Activated T-helper 1 cell treated with anti-CD3 and anti-CD28 coated beads, Interleukin-12 subunit alpha, Interleukin-12 subunit beta, Interleukin-2, Interleukin-4 antibody, amounts not matched to agents 30 ng/mL and 10 ng/mL and 1 ng/mL, durations not matched to agents 14 hours and 24 hours and 36 hours (primary cell): ENCODE measurements at regions of chrX and their contacts with region 1.

Region 1: GRCh38 chrX:41333744-41334259 is at the start of gene DDX3X:
- DNase-seq: peak; percentile 81
- H3K4me3 Mint-ChIP-seq: peak within 1 kb of the TSS; percentile 91
- H3K27ac Mint-ChIP-seq: peak within 1 kb of the TSS; percentile 99
- H3K4me1 Mint-ChIP-seq: peaks cover 41% of the 10 kb centered on the region
- H3K27me3 Mint-ChIP-seq: peaks cover 5% of the 10 kb centered on the region
- total RNA-seq, gene DDX3X: 312 and 337 TPM in 2 replicates

Region 2: GRCh38 chrX:40735325-40736169 is 598.3 kb before region 1 on chrX and contains the start of gene MED14:
- intact Hi-C with region 1: loop called (anchors 5 kb)
- DNase-seq: peak; percentile 82
- H3K4me3 Mint-ChIP-seq: peak within 1 kb of the TSS; percentile 87
- H3K27ac Mint-ChIP-seq: peak within 1 kb of the TSS; percentile 90
- H3K4me1 Mint-ChIP-seq: peaks cover 30% of the 10 kb centered on the region
- H3K27me3 Mint-ChIP-seq: no peaks in the 10 kb centered on the region
- total RNA-seq, gene MED14: 36.4 and 40.9 TPM in 2 replicates

Region 3: GRCh38 chrX:41275661-41276609 is 57.9 kb before region 1 on chrX:
- intact Hi-C with region 1: loop called (anchors 2 kb)
- DNase-seq: peak; percentile 16
- H3K4me3 Mint-ChIP-seq: peak overlapping the region; percentile 77
- H3K27ac Mint-ChIP-seq: peak overlapping the region; percentile 90
- H3K4me1 Mint-ChIP-seq: peaks cover 8% of the 10 kb centered on the region
- H3K27me3 Mint-ChIP-seq: no peaks in the 10 kb centered on the region

Region 4: DNA sequence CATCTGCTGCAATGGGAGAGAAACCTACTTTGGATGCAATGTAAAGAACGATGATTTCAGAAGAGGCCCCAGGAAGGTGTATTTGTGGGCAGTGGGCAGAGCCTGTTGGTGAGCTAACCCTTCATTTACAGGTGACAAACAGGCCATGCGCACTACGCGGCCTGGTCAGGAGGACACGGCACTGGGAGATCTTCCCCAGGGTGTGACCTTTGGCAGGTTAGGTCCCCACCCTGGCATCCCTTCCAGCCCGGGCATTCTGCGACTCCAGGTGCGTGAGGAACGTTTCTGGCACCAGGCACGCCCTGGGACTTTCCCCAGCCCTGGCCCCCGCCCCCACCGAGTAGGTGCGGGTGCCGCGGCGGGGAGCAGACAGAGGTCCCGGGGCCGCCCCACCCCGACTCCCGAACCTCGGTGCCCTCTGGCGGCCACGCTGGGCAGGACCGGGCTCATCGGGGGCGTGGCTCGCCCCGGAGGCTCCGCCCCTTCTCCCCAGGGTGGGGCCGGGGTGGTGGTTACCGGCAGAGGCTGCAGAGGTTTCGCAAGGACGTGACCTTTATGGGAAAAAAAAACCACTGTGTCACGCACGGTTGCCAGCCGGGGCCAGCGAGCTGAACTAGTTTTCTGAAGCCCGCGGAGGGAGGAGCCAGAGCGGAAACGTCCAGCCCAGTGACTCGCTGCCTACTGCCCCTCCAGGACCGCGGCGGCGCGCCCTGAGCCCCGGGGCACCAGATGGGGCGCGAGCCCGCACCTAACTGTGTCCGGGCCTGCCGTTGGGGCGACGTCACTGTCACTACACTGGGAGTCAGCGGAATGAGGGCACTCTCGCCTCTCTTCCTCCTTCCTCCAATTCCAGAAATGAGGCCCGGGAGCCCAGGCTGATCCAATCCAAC is 108.4 kb after region 1 on chrX:
- intact Hi-C with region 1: loop called (anchors 1 kb)
- DNase-seq: peak; percentile 87
- H3K4me3 Mint-ChIP-seq: peak overlapping the region; percentile 73
- H3K27ac Mint-ChIP-seq: peak overlapping the region; percentile 85
- H3K4me1 Mint-ChIP-seq: peaks cover 18% of the 10 kb centered on the region
- H3K27me3 Mint-ChIP-seq: no peaks in the 10 kb centered on the region

Region 5: DNA sequence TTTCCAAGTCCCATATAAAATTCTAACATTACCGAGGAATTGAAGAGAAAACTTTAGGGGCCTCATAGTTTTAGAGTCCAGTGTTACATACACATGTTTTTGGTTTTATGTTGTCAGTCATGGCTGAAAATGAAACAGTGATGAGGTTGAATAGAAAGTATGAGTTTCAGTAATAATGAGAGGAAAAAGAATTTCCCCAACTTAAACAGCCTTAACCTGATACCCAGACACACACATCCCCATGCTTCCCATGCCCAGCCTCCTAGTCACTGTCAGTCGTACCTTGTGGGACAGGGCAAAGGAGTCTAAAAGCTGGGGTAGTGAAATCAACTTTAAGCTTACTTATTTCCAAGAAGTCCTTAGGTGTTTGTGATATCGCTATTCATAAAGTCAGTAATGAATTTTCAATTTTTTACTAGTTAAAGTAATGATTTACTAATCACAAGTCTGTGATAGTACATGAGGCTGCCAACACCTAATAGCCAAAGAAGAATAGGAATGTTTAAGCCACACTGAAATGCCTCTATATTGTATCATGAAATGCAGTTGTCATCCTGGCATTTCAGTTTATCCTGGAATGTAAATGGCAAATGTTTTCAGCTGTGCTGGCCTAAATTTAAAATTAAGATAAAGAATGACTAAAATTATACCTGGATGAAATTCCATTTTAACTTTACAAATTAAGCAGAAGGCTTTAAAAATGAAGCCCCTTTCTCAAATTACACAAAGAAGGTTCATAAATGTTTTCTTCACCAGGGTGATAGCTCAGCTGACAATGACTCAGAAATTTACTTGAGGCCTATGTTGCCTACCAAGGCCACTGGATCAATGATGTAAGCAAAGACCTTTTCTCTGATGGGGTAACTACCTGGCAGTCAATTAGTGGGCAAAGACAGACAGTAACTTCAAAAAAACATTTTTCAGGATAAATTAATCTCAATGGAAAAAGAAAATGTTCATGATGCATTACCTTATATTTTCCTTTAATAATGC is 330.8 kb after region 1 on chrX:
- intact Hi-C with region 1: loop called (anchors 10 kb)
- DNase-seq: no peak
- H3K4me3 Mint-ChIP-seq: peak overlapping the region; percentile 7
- H3K27ac Mint-ChIP-seq: peak overlapping the region; percentile 88
- H3K4me1 Mint-ChIP-seq: peaks cover 46% of the 10 kb centered on the region
- H3K27me3 Mint-ChIP-seq: no peaks in the 10 kb centered on the region